Right ventricle myocardium inferior (tissue), 1 donor: ENCODE measurements at regions of chr10 and their contacts with region 1.

Region 1: GRCh38 chr10:109895095-109895818 is 28.1 kb downstream of the XPNPEP1 start:
- DNase-seq: peak; percentile 87
- ATAC-seq: peak; percentile 64

Region 2: GRCh38 chr10:110029450-110029849 is 134.2 kb after region 1 on chr10:
- intact Hi-C with region 1: no loop called
- DNase-seq: no peak
- ATAC-seq: no peak

Region 3: GRCh38 chr10:110567201-110568054 is 672.2 kb after region 1 on chr10 and contains the start of gene SMC3:
- intact Hi-C with region 1: loop called (anchors 5 kb)
- DNase-seq: peak; percentile 96
- ATAC-seq: peak; percentile 96
- total RNA-seq, gene SMC3: 23.3 TPM